ENCODE measurements at regions of chr9 and their contacts with region 1.

Region 1: DNA sequence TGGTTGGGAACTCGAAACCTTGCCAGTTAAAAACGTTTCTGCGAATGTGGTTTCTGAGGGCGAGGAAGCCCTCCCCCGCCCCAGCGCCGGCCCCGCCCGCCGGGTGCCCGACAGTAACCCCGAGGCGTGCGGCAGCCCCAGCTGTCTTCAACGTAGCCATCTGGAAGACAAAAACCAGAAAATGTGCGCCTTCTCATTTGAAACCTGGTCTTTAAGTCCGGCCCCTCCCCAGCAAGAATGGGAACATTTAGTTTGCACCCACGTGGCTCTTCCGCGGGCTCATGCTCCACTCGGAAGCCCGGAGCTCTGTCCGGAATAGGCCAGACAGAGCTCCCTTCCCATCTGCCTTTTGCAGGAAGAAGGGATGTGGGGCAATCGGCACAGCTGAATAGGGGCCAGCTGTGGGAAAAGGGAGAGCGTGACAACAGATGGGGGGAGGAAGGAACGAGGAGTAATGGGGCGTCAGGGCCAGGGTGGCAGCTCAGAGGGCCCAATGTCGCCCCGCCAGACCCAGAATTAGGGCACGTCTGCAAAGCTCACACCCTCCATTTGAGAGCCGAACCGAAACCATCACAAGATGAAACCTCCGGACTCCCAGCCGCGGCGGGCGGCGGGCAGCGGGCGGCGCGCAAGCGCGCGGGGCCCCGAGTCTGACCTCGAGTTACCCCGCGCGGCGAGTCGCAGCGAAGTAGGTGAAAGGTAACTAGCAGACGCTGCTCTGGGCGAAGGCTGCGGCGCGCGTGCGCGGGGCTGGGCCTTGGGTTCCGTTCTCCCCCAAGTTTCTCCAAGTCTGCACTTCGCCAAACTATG is 63.4 kb upstream of the ABCA1 start:
- DNase-seq: peak; percentile 58 to 93 (median 81)
- ATAC-seq: peak; percentile 72
- H3K4me3 ChIP-seq: peak overlapping the region; percentile 73 to 81
- H3K4me3 Mint-ChIP-seq: peak overlapping the region; percentile 89
- H3K27ac ChIP-seq: peak overlapping the region; percentile 78 to 87
- H3K27ac Mint-ChIP-seq: peak overlapping the region; percentile 96
- H3K4me1 ChIP-seq: peaks cover 38% of the 10 kb centered on the region
- H3K4me1 Mint-ChIP-seq: peaks cover 38% of the 10 kb centered on the region
- H3K27me3 ChIP-seq: peaks cover 0 to 2% of the 10 kb centered on the region in 2 experiments
- H3K27me3 Mint-ChIP-seq: peaks cover 4% of the 10 kb centered on the region
- CTCF ChIP-seq: no peak

Region 2: DNA sequence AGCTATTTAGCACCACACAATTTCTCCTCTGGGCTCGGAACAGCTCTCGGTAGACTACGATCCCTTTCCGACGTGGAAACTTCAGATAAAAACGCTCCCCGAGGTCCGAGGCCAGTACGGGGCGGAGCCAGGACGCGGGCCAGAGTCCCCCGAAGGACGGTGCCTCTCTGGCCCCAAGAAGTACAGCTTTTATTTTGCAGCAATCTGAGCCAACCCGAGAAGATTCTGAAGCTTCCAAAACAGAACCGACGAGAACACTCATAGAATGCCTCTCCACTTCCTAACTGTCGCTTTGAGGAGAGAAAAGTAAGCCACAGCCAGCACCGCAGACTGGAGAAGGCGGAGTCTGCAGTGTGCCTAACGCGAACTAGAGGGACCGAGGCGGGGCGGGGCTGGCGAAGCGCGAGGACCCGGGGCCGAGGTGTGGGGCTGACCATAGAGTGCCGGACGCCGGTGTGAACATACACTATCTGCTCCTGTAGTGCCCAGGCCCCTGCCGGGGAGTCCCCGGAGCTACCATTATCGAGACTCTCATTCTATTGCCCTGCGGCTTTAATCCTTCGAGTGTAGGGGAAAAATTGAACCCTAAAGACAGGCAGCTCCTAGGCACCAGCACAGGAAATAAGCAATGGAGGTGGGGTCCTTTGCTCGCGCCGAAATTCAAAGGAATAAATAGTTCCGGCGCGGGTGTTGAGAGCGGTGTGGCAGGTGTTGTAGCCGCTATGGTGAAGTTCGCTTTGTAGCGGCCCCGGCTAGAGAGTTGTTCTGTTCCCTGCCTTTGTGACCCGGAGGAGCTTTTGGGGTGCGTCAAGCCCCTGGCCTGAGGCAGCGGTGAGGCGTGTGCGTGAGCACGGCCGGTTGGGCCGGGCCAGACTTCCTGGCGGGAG is 897.5 kb before region 1 on chr9 and contains the start of gene SMC2:
- CTCF ChIA-PET with region 1: no interaction called
- POLR2A ChIA-PET with region 1: no interaction called
- intact Hi-C with region 1: loop called in 1 of 2 experiments (anchors 5 kb)
- DNase-seq: peak; percentile 90 to 96 (median 94)
- ATAC-seq: peak; percentile 96
- H3K4me3 ChIP-seq: peak within 1 kb of the TSS; percentile 58 to 79
- H3K4me3 Mint-ChIP-seq: peak within 1 kb of the TSS; percentile 98
- H3K27ac ChIP-seq: peak within 1 kb of the TSS; percentile 78 to 98
- H3K27ac Mint-ChIP-seq: peak within 1 kb of the TSS; percentile 98
- H3K4me1 ChIP-seq: peaks cover 21% of the 10 kb centered on the region
- H3K4me1 Mint-ChIP-seq: peaks cover 44% of the 10 kb centered on the region
- H3K27me3 ChIP-seq: no peaks in the 10 kb centered on the region
- H3K27me3 Mint-ChIP-seq: no peaks in the 10 kb centered on the region
- CTCF ChIP-seq: no peak
- total RNA-seq, gene SMC2: 1.9 to 2.0 TPM

Region 3: GRCh38 chr9:104694218-104694617 is 297.1 kb before region 1 on chr9 and contains the start of gene OR13D1:
- CTCF ChIA-PET with region 1: no interaction called
- POLR2A ChIA-PET with region 1: no interaction called
- intact Hi-C with region 1: no loop called
- DNase-seq: no peak
- ATAC-seq: no peak
- H3K4me3 ChIP-seq: no peak within 1 kb of the TSS
- H3K4me3 Mint-ChIP-seq: no peak within 1 kb of the TSS
- H3K27ac ChIP-seq: no peak within 1 kb of the TSS
- H3K27ac Mint-ChIP-seq: no peak within 1 kb of the TSS
- H3K4me1 ChIP-seq: no peaks in the 10 kb centered on the region
- H3K4me1 Mint-ChIP-seq: no peaks in the 10 kb centered on the region
- H3K27me3 ChIP-seq: no peaks in the 10 kb centered on the region
- H3K27me3 Mint-ChIP-seq: no peaks in the 10 kb centered on the region
- CTCF ChIP-seq: no peak
- total RNA-seq, gene OR13D1: not detected

Region 4: DNA sequence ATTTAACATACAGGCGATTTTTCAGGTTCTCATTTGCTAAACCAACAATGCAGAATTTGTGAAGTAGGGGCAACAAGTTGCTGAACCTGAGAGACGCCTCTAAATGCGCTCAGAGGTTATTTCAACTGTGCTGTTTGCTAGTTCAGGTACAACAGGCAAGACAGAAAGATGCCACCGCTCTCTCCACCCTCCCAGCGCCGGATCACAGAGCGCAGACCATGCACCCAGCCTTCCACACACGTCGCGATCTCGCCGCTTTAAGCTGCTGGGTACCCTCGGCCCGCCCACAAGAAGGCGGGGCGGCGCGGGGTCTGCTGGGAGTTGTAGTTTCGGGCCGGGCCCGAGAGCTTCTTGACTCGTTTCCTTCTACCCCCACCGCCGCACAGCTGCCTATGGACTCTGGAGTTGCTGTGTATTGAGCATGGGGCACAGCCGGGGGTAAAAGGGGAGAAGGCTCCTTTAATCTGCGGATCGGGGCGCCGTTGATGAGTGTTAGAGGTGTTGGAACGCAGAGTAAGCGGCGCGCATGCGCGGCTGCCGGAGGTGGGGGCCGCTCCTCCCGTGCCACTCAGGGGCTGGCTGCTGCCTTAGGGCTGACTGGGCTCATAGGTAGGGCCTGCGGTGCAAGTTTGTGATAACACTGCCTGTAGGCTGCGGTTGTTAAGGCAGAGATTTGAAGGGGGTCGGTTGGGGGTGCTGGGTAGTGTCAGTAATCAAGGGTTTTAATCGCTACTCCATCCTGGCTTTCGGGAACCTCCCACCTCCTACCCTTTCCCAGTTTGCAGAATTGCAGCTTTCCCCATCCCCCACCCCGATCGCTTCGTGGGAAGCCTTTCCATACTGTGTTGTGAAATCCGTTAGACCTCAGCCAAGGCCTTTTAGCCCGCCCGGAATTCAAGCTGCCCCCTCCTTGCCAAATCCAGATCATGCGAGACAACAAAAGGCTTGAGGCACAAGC is 23.0 kb before region 1 on chr9:
- CTCF ChIA-PET with region 1: no interaction called
- POLR2A ChIA-PET with region 1: no interaction called
- intact Hi-C with region 1: loop called (anchors 1 kb)
- DNase-seq: peak; percentile 77 to 91 (median 88)
- ATAC-seq: peak; percentile 98
- H3K4me3 ChIP-seq: peak overlapping the region; percentile 80 to 86
- H3K4me3 Mint-ChIP-seq: peak overlapping the region; percentile 91
- H3K27ac ChIP-seq: peak overlapping the region; percentile 11 to 47
- H3K27ac Mint-ChIP-seq: peak overlapping the region; percentile 73
- H3K4me1 ChIP-seq: peaks cover 14% of the 10 kb centered on the region
- H3K4me1 Mint-ChIP-seq: peaks cover 13% of the 10 kb centered on the region
- H3K27me3 ChIP-seq: peaks cover 0 to 4% of the 10 kb centered on the region in 2 experiments
- H3K27me3 Mint-ChIP-seq: peaks cover 5% of the 10 kb centered on the region
- CTCF ChIP-seq: no peak

Region 5: DNA sequence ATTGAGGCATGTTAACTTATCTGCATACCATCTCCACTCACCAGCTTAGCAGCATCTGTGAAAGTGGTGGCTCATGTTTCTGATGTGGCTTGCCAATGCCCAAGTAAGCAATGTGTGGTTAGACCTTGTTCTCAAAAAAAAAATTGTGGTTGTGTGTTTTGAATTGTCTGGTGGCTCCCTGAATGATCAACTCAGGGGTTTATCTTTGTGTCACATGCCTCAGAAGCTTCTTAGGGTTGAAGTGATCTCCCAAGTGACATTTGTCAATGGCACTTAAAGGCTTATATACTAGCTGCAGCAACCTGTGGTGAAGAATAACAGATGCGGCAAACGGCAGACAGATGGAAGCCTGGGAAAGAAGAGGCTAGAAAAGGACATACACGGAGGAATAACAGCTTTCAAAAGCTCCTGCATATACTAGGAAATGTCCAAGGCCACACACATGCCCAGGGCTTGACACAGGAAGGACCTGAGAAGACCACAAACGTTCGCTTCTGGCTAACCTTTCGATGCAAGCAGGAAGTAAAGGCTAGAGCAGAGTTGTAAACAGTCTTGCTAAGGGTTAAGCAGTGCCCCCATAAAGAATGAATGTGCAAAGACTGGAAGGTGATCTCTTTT is 414.3 kb after region 1 on chr9:
- CTCF ChIA-PET with region 1: no interaction called
- POLR2A ChIA-PET with region 1: no interaction called
- intact Hi-C with region 1: loop called (anchors 1 to 5 kb)
- DNase-seq: peak; percentile 25 to 90 (median 57)
- ATAC-seq: peak; percentile 89
- H3K4me3 ChIP-seq: peak overlapping the region; percentile 3 to 12
- H3K4me3 Mint-ChIP-seq: peak overlapping the region; percentile 63
- H3K27ac ChIP-seq: no peak overlapping the region
- H3K27ac Mint-ChIP-seq: peak overlapping the region; percentile 74
- H3K4me1 ChIP-seq: peaks cover 23% of the 10 kb centered on the region
- H3K4me1 Mint-ChIP-seq: peaks cover 30% of the 10 kb centered on the region
- H3K27me3 ChIP-seq: peaks cover 17 to 30% of the 10 kb centered on the region in 2 experiments
- H3K27me3 Mint-ChIP-seq: peaks cover 48% of the 10 kb centered on the region
- CTCF ChIP-seq: no peak

Region 6: DNA sequence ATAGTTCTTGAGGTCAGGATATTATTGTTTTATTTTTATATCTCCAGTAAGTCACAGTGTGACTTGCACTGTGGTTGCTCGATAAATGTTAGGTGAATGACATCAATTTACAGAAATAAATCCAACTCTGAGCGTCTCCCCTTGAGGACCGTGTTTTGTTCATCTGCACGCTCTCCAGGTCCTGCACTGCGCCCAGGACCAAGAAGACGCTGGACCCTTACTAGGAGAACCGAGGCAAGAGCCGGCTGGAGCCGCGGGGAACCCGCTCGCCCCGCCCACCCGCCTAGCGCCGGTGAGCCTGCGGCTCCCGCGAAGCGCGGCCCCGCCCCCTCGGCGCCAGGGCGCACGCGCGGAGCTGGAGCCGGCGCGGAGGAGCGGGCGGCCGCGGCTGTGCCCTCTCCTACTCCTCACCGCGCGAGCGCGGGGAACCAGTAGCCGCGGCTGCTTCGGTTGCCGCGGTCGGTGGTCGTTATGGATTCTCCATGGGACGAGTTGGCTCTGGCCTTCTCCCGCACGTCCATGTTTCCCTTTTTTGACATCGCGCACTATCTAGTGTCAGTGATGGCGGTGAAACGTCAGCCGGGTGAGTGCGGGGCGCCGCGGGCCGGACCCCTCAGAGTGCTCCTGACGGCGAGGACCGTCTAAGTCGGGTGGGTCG is 703.0 kb after region 1 on chr9 and contains the start of gene TMEM38B:
- CTCF ChIA-PET with region 1: no interaction called
- POLR2A ChIA-PET with region 1: no interaction called
- intact Hi-C with region 1: loop called in 1 of 2 experiments (anchors 10 kb)
- DNase-seq: peak; percentile 54 to 91 (median 73)
- ATAC-seq: peak; percentile 90
- H3K4me3 ChIP-seq: peak within 1 kb of the TSS; percentile 69 to 78
- H3K4me3 Mint-ChIP-seq: peak within 1 kb of the TSS; percentile 90
- H3K27ac ChIP-seq: peak within 1 kb of the TSS; percentile 20 to 58
- H3K27ac Mint-ChIP-seq: peak within 1 kb of the TSS; percentile 73
- H3K4me1 ChIP-seq: peaks cover 15% of the 10 kb centered on the region
- H3K4me1 Mint-ChIP-seq: peaks cover 32% of the 10 kb centered on the region
- H3K27me3 ChIP-seq: peaks cover 0 to 13% of the 10 kb centered on the region in 2 experiments
- H3K27me3 Mint-ChIP-seq: peaks cover 32% of the 10 kb centered on the region
- CTCF ChIP-seq: no peak
- total RNA-seq, gene TMEM38B: 9.5 to 14.1 TPM